T-cell (primary cell): ENCODE measurements at regions of chr10 and their contacts with region 1.

Region 1: DNA sequence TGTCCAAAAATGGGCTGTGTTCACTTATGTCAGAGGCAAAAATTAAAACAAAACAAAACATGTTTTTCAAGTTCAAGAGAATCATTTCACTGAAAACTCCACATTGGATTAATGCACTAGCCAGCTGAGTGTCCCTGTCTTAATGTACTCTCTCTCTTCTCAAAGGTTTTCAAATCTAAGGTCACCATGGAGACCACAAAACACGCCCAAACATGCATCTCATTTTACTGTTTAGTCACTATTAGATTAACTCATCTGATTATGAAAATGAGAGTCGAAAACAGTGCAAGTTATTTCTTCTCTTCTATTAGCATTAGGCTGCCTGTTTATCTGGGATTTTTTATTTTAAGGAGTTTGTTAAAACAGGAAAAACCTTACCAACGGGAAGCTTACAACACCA is 70.8 kb upstream of the ASAH2 start:
- DNase-seq: peak in 1 of 35 experiments; percentile 5
- ATAC-seq: no peak
- H3K4me3 ChIP-seq: no peak overlapping the region
- H3K4me3 Mint-ChIP-seq: no peak overlapping the region
- H3K27ac ChIP-seq: no peak overlapping the region
- H3K27ac Mint-ChIP-seq: no peak overlapping the region
- H3K4me1 ChIP-seq: no peaks in the 10 kb centered on the region
- H3K4me1 Mint-ChIP-seq: peaks cover 4 to 25% (median 13%) of the 10 kb centered on the region in 3 donors
- H3K27me3 ChIP-seq: no peaks in the 10 kb centered on the region
- H3K27me3 Mint-ChIP-seq: no peaks in the 10 kb centered on the region

Region 2: DNA sequence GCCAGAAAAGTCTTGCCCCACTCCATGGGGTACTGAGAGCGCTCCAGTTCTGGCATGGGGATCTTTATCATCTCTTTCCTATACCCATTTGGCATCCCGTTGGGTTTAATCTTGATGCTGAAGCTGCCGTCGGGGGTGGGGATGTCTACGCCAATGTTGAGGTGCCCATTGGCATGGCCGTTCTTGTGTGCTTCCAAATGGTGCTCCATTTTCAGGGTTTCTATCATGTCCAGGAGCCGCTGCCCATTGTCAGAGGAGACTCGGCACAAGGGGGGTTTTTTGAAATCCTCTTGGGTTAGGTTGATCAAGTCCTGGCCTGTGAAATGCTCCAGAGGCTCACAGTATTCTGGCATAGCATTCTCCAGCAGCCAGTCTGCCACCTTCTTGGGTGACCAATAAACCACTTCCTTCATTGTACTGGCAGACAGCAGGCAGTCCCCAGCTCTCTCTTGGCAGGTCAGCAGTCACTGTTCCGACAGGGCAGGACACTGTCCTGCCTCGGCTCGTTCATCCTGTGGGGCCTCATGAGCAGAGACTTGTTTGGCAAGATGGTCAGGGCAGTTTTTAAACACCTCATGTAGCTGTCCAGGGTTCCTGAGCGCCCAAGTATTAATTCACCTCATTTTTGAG is 21.7 kb after region 1 on chr10:
- CTCF ChIA-PET with region 1: no interaction called
- POLR2A ChIA-PET with region 1: interaction called in 1 of 2 experiments, 10 read pairs
- DNase-seq: no peak
- ATAC-seq: no peak
- H3K4me3 ChIP-seq: no peak overlapping the region
- H3K4me3 Mint-ChIP-seq: no peak overlapping the region
- H3K27ac ChIP-seq: no peak overlapping the region
- H3K27ac Mint-ChIP-seq: no peak overlapping the region
- H3K4me1 ChIP-seq: peaks cover 0 to 7% of the 10 kb centered on the region in 2 experiments
- H3K4me1 Mint-ChIP-seq: peaks cover 15 to 24% (median 21%) of the 10 kb centered on the region in 3 donors
- H3K27me3 ChIP-seq: no peaks in the 10 kb centered on the region
- H3K27me3 Mint-ChIP-seq: no peaks in the 10 kb centered on the region